Natural killer cell (primary cell): ENCODE measurements at regions of chr19 and their contacts with region 1.

Region 1: DNA sequence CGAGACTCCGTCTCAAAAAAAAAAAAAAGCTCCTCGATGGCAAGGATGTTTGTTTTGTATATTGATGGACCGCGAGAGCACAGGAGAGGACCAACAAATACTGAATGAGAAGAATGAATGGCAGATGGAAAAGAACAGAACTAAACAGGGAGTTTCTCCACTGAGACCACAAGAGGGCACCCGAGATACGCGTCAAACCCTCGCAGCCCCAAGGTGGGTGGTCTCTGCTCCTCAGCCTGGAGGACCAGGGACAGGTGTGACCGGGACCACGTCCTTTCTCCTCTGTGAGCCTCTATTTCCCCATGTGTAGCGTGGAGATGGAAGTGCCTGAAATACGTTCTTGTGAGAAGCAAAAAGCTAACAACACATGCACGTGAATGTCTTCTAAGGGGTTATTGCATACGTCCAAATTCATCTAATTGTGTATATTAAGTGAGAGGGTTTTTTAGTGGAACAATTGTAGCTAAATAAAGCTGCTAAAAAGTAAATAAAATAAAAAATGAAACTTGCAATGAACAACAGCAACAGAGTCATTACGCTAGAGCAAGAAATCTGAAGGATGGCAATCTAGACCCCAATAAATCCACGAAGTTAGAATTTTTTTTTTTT is 8.3 kb upstream of the CDC42EP5 start:
- DNase-seq: peak in 1 of 2 donors; percentile 81
- ATAC-seq: peak; percentile 54 to 75 (median 68)
- H3K4me3 ChIP-seq: no peak overlapping the region
- H3K4me3 Mint-ChIP-seq: peak overlapping the region; percentile 78
- H3K27ac ChIP-seq: no peak overlapping the region
- H3K27ac Mint-ChIP-seq: peak overlapping the region in 1 of 2 donors; percentile 62
- H3K4me1 ChIP-seq: peaks cover 41% of the 10 kb centered on the region
- H3K4me1 Mint-ChIP-seq: peaks cover 42 to 60% of the 10 kb centered on the region in 2 donors
- H3K27me3 ChIP-seq: peaks cover 8% of the 10 kb centered on the region
- H3K27me3 Mint-ChIP-seq: peaks cover 39 to 44% of the 10 kb centered on the region in 2 donors
- CTCF ChIP-seq: peak; percentile 85

Region 2: GRCh38 chr19:54463531-54464043 is 17.8 kb before region 1 on chr19 and contains the start of gene LENG9:
- intact Hi-C with region 1: no loop called
- DNase-seq: peak; percentile 94 to 99
- ATAC-seq: peak; percentile 69 to 83 (median 72)
- H3K4me3 ChIP-seq: peak within 1 kb of the TSS; percentile 48
- H3K4me3 Mint-ChIP-seq: peak within 1 kb of the TSS; percentile 83
- H3K27ac ChIP-seq: peak within 1 kb of the TSS; percentile 83
- H3K27ac Mint-ChIP-seq: peak within 1 kb of the TSS; percentile 88 to 97
- H3K4me1 ChIP-seq: peaks cover 30% of the 10 kb centered on the region
- H3K4me1 Mint-ChIP-seq: peaks cover 33 to 48% of the 10 kb centered on the region in 2 donors
- H3K27me3 ChIP-seq: no peaks in the 10 kb centered on the region
- H3K27me3 Mint-ChIP-seq: peaks cover under 1 to 6% of the 10 kb centered on the region in 2 donors
- CTCF ChIP-seq: no peak
- total RNA-seq, gene LENG9: 3.2 to 5.6 (median 4.3) TPM

Region 3: DNA sequence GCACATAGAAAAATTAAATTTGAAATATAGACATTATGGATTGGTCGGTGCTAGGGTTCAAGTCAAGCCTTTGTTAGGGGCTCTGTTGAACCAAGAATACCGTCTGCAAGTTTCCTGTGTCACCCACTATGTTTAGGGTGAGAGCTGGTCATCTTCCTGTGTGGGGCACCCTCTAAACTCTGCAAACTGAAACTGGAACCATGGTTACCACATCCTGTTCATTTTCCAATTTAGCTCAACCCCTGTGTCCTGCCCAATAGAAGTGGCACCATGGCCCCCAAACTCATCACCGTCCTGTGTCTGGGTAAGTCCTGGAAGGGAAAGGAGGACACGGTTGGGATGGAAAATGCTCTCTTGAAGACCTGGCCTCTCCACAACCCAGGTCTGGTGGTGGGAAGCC is 51.1 kb after region 1 on chr19:
- intact Hi-C with region 1: loop called (anchors 5 kb)
- DNase-seq: peak; percentile 54 to 62
- ATAC-seq: peak; percentile 84 to 92 (median 91)
- H3K4me3 ChIP-seq: peak overlapping the region; percentile 51
- H3K4me3 Mint-ChIP-seq: peak overlapping the region; percentile 90
- H3K27ac ChIP-seq: peak overlapping the region; percentile 88
- H3K27ac Mint-ChIP-seq: peak overlapping the region; percentile 88 to 90
- H3K4me1 ChIP-seq: peaks cover 47% of the 10 kb centered on the region
- H3K4me1 Mint-ChIP-seq: peaks cover 78 to 92% of the 10 kb centered on the region in 2 donors
- H3K27me3 ChIP-seq: peaks cover 6% of the 10 kb centered on the region
- H3K27me3 Mint-ChIP-seq: peaks cover 5 to 12% of the 10 kb centered on the region in 2 donors
- CTCF ChIP-seq: no peak

Region 4: GRCh38 chr19:54674021-54674617 is 192.7 kb after region 1 on chr19:
- intact Hi-C with region 1: loop called (anchors 1 kb)
- DNase-seq: peak in 1 of 2 donors; percentile 50
- ATAC-seq: peak in 1 of 3 donors; percentile 42
- H3K4me3 ChIP-seq: no peak overlapping the region
- H3K4me3 Mint-ChIP-seq: no peak overlapping the region
- H3K27ac ChIP-seq: no peak overlapping the region
- H3K27ac Mint-ChIP-seq: no peak overlapping the region
- H3K4me1 ChIP-seq: peaks cover 7% of the 10 kb centered on the region
- H3K4me1 Mint-ChIP-seq: peaks cover 10 to 12% of the 10 kb centered on the region in 2 donors
- H3K27me3 ChIP-seq: peaks cover 4% of the 10 kb centered on the region
- H3K27me3 Mint-ChIP-seq: peaks cover 17 to 23% of the 10 kb centered on the region in 2 donors
- CTCF ChIP-seq: peak; percentile 76